ENCODE measurements at regions of chr16 and their contacts with region 1.

Region 1: DNA sequence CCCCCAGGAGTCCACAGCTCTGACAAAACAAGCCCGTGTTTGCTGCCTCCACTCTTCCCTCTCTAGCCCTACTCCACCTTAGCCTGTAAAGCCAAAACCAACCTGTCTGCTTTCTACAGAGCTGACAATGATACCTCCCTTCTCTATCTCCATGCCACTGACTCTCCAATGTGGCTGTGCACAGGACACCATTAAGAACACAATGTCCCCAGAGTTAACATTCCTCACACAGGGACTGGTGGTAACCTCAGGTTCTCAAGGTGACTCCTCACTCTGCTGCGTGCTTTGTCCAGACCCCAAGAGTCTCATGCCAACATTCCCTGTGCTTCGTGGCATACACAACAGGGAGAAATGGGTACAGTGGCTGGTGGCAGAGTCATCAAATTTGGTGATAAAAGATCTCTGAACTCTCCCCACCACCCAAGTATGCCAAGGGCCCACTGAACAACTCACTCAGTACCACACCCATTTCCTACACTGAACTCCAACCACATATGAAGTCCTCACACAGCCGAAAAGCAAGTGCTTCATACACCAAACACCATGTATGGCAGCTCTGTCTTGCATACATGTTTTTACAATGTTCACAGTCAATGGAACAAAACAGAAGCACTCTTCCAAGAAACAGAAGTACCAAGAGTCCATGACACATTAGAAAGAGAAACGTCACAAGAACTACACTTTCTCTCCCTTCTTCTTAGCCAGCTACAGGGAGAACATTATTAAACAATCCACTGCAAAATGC is 21.1 kb downstream of the CSNK2A2 start:
- DNase-seq: peak in 4 of 10 donors; percentile 12 to 57 (median 42)
- ATAC-seq: peak; percentile 91 to 95
- H3K4me3 Mint-ChIP-seq: peak overlapping the region; percentile 17 to 80 (median 68)
- H3K27ac Mint-ChIP-seq: peak overlapping the region; percentile 87 to 96 (median 92)
- H3K4me1 Mint-ChIP-seq: peaks cover 17 to 33% (median 31%) of the 10 kb centered on the region in 4 donors
- H3K27me3 Mint-ChIP-seq: no peaks in the 10 kb centered on the region

Region 2: DNA sequence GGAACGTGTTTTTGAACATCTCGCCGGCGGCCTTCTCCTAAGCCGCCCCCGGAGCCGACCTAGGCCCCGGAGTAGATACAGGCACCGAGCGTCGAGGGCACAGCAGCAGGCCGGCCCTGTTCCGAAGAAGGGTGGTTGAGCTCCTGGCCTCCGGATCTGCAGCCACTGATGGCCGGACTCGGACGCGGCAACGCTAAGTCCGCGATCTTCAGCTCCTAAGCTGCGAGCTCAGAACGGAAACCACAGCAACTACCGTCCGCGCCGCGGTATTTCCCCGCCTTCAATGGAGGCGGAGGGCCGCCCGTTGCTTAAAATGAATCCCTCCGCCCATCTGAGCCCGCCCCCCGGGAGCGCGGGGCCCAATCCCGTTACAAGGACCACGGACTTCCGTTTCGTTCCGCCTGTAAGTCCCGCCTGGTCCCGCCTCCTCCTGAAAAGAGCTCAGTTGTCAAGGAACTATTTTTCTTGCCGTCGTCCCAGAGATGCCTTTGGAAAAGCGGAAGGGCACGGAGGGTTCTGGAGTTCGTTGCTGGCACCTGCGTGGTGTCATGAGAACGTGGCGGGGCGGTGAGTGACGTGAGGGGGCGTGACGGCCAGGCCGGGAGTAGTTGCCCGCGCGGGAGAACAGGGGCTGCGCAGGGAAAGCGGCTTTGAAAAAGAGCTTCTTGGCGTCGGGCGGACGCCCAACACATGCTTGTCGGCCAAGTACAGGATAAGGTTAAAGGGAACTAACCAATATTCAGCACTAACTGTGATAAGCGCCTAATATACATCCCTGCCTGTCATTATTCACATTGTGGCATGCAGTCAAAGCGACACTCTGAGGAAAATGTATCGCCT is 47.5 kb before region 1 on chr16 and contains the start of gene CFAP20:
- POLR2A ChIA-PET with region 1: interaction called, 12 read pairs
- DNase-seq: peak; percentile 89 to 98 (median 96)
- ATAC-seq: peak; percentile 79 to 82
- H3K4me3 Mint-ChIP-seq: peak within 1 kb of the TSS; percentile 90 to 100 (median 93)
- H3K27ac Mint-ChIP-seq: peak within 1 kb of the TSS; percentile 89 to 98 (median 97)
- H3K4me1 Mint-ChIP-seq: peaks cover 17 to 48% (median 44%) of the 10 kb centered on the region in 4 donors
- H3K27me3 Mint-ChIP-seq: no peaks in the 10 kb centered on the region
- polyA plus RNA-seq, gene CFAP20: 23.9 to 38.8 (median 27.5) TPM

Region 3: GRCh38 chr16:58187092-58187491 is 10.3 kb after region 1 on chr16:
- POLR2A ChIA-PET with region 1: no interaction called
- DNase-seq: no peak
- ATAC-seq: no peak
- H3K4me3 Mint-ChIP-seq: no peak overlapping the region
- H3K27ac Mint-ChIP-seq: peak overlapping the region in 2 of 10 donors; percentile 21 to 34
- H3K4me1 Mint-ChIP-seq: peaks cover 9 to 26% (median 19%) of the 10 kb centered on the region in 4 donors
- H3K27me3 Mint-ChIP-seq: no peaks in the 10 kb centered on the region

Region 4: GRCh38 chr16:58459344-58460218 is 282.8 kb after region 1 on chr16:
- POLR2A ChIA-PET with region 1: no interaction called
- DNase-seq: no peak
- ATAC-seq: no peak
- H3K4me3 Mint-ChIP-seq: peak overlapping the region in 1 of 10 donors; percentile 53
- H3K27ac Mint-ChIP-seq: no peak overlapping the region
- H3K4me1 Mint-ChIP-seq: peaks cover 1 to 4% (median 2%) of the 10 kb centered on the region in 4 donors
- H3K27me3 Mint-ChIP-seq: peaks cover 8 to 39% (median 24%) of the 10 kb centered on the region in 5 donors

Measured in naive thymus-derived CD8-positive, alpha-beta T cell (primary cell).